Cardiac septum (tissue), 1 donor: ENCODE measurements at regions of chr6 and their contacts with region 1.

Region 1: DNA sequence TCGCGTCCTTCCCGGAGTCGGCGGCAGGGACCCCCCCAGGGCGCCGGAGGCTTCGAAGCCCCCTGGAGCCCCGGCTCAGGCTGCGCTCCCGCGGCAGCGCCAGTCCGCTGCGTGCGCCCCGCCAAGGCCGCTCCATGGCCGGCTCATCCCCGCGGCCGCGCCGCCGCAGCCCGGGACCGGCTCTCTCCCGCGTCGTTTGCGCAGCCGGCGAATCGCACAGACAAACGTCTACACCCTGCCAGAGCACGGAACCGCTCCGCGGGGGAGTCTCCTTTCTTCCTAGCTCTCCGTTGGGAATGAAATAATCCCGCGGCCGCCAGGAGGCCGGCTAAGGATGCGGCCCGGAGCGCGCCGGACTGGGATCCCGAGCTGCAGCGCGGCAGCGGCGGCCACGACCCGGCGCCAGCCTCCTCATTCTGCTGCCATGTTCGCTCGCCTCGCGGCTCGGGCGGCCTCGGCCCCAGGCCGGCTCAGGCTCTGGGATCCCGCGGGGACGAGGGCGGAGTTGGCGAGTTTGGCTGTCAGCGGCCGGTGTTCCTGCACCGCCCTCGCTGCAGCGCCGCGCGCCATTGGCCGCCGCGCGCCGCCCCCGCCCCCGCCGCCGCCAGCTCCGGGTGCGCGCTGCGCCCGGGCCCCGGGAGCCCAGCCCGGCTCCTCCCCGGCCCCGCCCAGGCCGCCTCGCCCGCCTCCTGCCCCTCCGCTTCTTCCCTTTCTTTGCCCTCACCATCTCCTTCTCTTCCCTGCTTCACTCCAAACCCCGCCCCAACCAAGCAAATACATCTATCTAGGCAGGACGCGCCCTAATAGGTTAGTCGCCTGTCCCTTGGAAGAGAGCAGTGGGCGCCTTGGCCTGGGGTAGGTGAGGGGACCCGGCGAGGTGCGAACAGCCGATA is at the start of gene GFOD1:
- DNase-seq: peak; percentile 96
- total RNA-seq, gene GFOD1: 54.0 TPM

Region 2: DNA sequence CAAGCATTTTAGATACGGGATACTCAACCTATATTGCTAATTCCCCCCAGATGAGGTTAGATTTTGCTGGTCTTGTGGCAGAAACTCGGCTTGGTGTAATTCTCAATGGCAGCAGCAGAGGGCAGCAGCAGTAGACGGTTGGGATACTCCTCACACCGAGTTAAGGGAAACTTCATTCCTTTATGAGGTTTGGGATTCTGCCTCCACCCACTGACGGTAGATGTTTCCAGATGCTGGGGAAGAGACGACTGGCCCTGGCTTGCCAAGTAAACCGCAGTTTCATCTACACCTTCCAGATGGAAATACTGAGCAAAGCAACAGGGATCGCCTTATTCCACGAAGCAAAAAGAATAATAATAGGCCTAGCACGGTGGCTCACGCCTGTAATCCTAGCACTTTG is 150.8 kb before region 1 on chr6:
- intact Hi-C with region 1: loop called (anchors 5 kb)
- DNase-seq: peak; percentile 77

Region 3: DNA sequence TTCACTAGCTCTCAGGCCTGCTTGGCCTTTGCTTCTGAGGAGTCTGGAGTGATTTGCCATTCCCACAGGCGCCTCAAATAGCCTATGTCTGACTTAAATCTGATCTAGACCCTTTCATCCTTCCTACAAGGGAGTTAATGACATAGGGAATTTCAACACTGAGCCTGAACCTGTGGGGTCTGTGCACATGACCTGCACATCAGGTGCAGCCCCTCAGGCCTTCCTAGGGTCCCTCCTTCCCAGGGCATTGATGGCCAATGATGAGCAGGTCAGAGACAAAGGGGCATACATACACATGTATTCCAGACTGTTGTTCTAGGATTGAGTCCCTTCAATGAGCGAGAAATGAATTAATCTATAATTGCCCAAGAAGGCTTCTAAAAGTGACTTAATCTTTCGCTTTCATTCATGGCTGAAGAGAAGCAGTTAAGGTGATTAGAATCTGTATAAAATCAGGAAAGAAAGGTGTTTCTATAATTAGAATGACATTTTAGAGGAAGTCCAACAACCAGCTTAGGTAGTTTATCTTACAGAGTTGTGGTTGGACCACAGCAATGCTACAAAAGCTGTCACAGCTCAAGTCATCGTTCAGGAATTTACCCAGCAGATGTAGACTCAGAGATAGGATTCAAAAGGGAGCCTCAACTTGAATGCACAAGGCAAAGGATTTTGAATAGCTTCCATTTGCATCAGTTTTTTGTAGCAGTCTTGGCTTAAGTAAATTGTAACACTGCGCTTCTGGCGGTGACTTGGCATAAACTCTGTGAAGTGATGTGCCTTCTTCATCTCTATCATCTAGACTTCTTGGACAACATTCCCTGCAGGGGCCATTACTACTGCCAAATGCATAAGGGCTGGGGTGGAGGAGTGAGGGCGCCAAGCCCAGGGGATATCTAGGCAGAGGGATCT is 132.1 kb before region 1 on chr6:
- intact Hi-C with region 1: loop called (anchors 5 kb)
- DNase-seq: no peak

Region 4: GRCh38 chr6:13413900-13414555 is 73.3 kb before region 1 on chr6:
- intact Hi-C with region 1: loop called (anchors 5 kb)
- DNase-seq: no peak

Region 5: GRCh38 chr6:13427801-13428582 is 59.4 kb before region 1 on chr6:
- intact Hi-C with region 1: no loop called
- DNase-seq: no peak

Region 6: GRCh38 chr6:13526727-13527670 is 39.6 kb after region 1 on chr6:
- intact Hi-C with region 1: loop called (anchors 5 kb)
- DNase-seq: no peak

Region 7: GRCh38 chr6:13574149-13574570 is 86.8 kb after region 1 on chr6:
- intact Hi-C with region 1: loop called (anchors 2 kb)
- DNase-seq: peak; percentile 95